ENCODE measurements at regions of chr2 and their contacts with region 1.

Region 1: GRCh38 chr2:85728883-85729824 is 24.6 kb upstream of the ATOH8 start:
- DNase-seq: peak; percentile 93
- ATAC-seq: peak; percentile 95

Region 2: DNA sequence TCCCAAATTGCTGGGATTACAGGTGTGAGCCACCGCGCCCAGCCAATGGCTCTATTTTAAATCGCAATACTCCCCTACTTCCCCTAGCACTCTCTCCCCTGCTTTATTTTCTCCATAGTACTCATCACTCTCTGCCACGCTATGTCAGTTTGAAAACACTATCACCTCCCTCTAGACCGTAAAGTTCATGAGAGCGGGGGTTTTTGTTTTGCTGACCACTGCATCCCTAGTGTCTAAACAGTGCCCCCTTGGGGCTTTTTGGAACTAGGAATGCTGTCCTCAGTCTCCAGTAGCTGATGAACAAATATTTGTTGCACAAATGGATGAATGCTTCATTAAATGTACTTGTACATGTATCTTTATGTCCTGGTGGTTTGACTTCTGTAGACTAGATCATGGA is 68.8 kb after region 1 on chr2:
- intact Hi-C with region 1: loop called (anchors 2 kb)
- DNase-seq: no peak
- ATAC-seq: peak; percentile 34

Region 3: GRCh38 chr2:85804583-85804982 is 75.4 kb after region 1 on chr2:
- intact Hi-C with region 1: loop called (anchors 2 kb)
- DNase-seq: no peak
- ATAC-seq: no peak

Region 4: GRCh38 chr2:85813982-85814801 is 85.0 kb after region 1 on chr2:
- intact Hi-C with region 1: loop called (anchors 1 kb)
- DNase-seq: peak; percentile 95
- ATAC-seq: peak; percentile 98

Region 5: DNA sequence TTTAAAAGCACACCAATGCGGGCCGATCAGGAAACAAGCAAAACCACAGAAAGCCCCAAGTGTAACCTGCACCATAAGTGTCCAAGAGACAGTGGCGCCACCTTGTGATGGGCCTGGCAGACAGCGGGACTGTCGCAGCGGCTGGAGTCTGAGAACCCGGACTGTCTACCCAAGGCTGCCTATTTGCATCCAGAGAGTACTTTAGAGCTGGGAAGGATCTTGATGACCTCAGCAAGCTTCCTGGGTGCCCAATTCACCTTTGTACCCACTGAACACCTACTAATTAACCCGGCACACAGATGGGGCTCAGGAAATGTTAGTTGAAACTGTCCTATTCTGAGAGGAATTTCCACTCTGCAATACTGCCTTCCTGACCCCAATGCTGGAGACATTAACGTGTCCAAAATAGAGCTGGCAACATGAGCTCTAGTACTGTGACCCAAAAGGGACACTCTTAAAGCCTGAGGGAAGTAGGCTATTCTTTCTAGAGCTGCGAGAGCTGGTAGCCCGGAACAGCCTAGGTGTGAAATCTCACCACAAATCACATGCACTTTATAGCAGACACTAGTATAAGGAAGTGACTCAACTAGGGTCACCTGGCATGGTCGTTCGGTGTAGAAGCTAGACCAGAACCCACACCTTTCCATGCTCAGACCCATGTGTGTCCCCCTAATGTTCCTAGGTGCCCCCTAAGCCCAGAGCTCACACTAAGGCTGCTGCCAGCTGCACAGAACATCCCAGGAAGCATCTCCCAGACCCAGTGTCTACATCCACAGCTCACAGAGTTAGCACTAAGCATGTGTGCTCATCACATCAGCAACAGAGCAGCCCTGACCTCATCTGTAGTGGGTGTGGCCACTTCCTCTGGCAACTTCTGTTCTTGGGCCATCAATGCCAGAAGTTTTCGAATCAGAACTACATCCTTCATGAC is 351.1 kb after region 1 on chr2:
- intact Hi-C with region 1: loop called (anchors 10 kb)
- DNase-seq: peak; percentile 89
- ATAC-seq: peak; percentile 82